Transverse colon (tissue), 4 donors: ENCODE measurements at regions of chr2 and their contacts with region 1.

Region 1: DNA sequence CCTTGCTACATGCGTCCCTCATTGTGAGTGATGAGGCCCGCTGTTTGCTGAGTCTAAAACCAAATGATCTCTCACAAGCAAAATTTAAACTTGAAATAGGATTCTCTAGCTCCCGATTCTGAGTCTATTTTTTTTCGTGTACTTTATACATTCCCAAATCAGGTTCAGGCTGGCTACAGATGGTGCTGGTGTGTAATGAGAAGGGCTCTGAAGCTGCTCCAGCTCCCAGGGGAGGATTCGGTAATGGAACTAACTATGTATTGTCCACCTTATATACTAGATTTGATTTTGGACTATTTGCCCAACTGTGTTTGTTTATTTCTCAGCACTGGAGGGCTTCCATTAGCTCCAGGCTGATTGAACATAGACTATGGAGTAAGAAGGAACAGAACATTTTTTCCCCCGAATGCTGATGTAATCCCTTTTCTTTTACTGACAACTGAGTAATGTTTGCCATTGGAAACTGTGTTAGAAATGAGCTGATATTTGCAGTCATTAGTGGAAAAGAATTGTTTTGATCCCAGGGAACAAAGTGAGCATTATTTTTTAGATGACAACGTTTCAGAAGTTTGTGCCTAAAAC is 274.0 kb upstream of the FIGN start:
- DNase-seq: no peak
- H3K4me3 ChIP-seq: no peak overlapping the region
- H3K27ac ChIP-seq: no peak overlapping the region
- H3K4me1 ChIP-seq: no peaks in the 10 kb centered on the region
- H3K27me3 ChIP-seq: no peaks in the 10 kb centered on the region
- CTCF ChIP-seq: no peak
- EP300 ChIP-seq: no peak
- POLR2A ChIP-seq: no peak

Region 2: DNA sequence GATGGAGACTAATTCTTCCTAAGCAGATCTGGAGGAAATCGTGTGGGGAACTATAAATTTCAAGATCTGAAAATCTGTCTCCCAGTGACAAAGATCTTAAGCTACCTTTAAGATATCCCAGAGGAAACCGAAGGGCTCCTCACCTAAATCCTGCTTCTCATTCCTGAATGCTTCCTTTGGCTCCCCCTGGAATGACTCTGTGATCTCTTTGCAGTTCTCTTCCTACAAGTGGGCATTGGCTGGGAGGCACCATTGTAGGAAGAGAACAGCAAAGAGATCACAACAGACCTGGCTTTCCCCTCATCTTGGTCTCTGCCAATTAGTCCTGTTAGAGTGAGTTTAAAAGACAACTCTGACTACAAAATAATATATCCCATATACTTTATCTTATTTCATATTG is 1101.3 kb before region 1 on chr2:
- in situ Hi-C with region 1: no loop called
- intact Hi-C with region 1: no loop called
- DNase-seq: no peak
- H3K4me3 ChIP-seq: no peak overlapping the region
- H3K27ac ChIP-seq: no peak overlapping the region
- H3K4me1 ChIP-seq: no peaks in the 10 kb centered on the region
- H3K27me3 ChIP-seq: no peaks in the 10 kb centered on the region
- CTCF ChIP-seq: no peak
- EP300 ChIP-seq: no peak
- POLR2A ChIP-seq: no peak

Region 3: DNA sequence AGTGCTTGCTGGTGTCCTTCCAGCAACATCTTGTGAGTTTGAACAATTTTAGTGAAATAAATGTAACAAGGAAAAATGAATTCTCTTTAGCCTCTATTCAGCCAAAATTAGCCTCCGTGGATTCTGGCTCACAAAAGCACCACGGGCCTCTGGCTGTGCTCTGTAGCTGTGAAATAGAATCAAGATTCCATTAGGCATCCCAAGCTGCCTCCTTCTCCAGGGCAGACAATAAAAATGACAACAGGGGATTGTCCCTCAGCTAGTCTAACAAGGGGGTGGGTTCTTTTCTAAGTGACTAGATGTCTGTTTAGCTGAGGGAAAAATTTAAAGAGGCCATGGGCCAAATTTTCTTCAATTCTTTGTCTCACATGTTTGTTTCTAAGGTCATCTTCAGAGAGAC is 19.3 kb before region 1 on chr2:
- in situ Hi-C with region 1: no loop called
- intact Hi-C with region 1: loop called (anchors 1 kb)
- DNase-seq: no peak
- H3K4me3 ChIP-seq: no peak overlapping the region
- H3K27ac ChIP-seq: no peak overlapping the region
- H3K4me1 ChIP-seq: no peaks in the 10 kb centered on the region
- H3K27me3 ChIP-seq: no peaks in the 10 kb centered on the region
- CTCF ChIP-seq: no peak
- EP300 ChIP-seq: no peak
- POLR2A ChIP-seq: no peak

Region 4: DNA sequence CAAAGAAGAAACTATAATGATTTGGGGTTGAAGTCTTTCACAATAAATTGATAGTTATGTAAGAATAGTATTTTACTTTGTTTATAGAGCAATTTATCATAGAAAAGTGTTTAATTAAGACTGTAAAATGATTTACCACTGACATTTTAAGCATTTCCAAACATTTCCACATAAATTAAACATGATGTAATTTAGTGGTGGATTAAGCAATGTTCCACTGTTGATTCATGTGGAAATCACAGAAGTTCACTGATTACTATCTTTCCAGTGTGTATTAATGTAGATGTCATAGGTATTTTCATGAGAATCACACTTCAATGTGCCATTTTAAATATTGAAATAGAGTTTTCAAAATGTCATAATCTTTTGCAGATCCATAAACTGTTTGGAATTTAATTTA is 651.5 kb after region 1 on chr2:
- in situ Hi-C with region 1: no loop called
- intact Hi-C with region 1: loop called (anchors 5 kb)
- DNase-seq: no peak
- H3K4me3 ChIP-seq: no peak overlapping the region
- H3K27ac ChIP-seq: no peak overlapping the region
- H3K4me1 ChIP-seq: no peaks in the 10 kb centered on the region
- H3K27me3 ChIP-seq: no peaks in the 10 kb centered on the region
- CTCF ChIP-seq: no peak
- EP300 ChIP-seq: no peak
- POLR2A ChIP-seq: no peak